B cell (primary cell): ENCODE measurements at regions of chr7 and their contacts with region 1.

Region 1: DNA sequence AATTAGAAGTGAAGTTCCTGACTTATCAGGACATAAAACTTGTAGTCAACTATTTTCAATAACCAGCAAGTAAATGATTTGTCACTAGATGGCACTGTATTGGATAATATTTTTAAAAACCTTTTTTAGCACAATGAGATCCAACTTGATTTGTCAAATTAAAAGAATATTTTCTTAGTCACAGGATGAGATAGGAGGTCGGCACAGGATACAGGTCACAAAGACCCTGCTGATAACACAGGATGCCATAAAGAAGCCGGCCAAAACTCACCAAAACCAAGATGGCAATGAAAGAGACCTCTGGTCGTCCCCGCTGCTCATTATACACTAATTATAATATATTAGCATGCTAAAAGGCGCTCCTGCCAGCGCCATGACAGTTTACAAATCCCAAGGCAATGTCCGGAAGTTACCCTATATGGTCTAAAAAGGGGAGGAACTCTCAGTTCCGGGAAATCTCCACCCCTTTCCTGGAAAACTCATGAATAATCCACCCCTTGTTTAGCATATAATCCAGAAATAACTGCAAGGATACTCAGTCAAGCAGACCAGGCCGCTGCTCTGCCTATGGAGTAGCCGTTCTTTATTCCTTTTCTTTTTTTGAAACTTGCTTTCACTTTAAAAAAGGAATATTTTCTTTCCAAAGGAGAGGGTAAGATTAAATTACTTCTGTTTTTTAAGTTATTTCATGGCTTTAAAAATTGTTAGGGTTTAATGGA is 255.7 kb upstream of the MKLN1 start:
- DNase-seq: no peak
- ATAC-seq: no peak
- H3K4me3 ChIP-seq: no peak overlapping the region
- H3K4me3 Mint-ChIP-seq: no peak overlapping the region
- H3K27ac ChIP-seq: no peak overlapping the region
- H3K27ac Mint-ChIP-seq: no peak overlapping the region
- H3K4me1 ChIP-seq: peaks cover 38 to 48% of the 10 kb centered on the region in 2 donors
- H3K4me1 Mint-ChIP-seq: peaks cover 78% of the 10 kb centered on the region
- H3K27me3 ChIP-seq: no peaks in the 10 kb centered on the region
- H3K27me3 Mint-ChIP-seq: no peaks in the 10 kb centered on the region
- CTCF ChIP-seq: peak; percentile 65

Region 2: DNA sequence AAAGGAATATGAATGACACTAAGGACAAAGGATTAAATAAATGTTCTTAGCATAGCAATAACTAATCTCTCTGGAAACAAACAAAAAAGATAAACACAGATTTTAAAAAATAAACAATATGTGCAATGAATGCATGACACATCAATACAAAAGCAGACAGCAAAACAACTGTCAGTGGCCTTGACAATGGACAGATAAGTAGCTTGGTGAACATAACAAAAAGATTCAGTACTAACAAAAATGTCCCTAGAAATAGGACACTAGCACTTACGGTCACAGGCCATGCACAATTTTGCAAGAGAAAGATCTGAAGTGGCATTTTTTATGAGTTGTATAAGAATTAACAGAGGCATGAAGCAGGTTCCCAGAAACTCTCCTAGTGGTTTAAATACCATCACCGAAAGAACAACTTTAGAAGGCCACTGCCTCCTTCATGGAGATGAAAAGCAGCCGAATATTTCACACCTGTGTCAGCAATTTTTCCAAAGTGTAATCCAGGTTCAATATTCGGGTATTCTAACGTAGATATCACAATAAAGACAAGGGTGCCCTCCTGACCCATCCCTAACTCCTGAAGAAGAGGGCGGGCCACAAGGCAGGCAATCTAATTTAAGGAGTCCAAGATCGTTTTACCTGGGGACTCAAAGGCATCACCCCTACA is 24.5 kb after region 1 on chr7:
- CTCF ChIA-PET with region 1: interaction called, 3 read pairs
- POLR2A ChIA-PET with region 1: no interaction called
- intact Hi-C with region 1: loop called (anchors 2 kb)
- DNase-seq: no peak
- ATAC-seq: no peak
- H3K4me3 ChIP-seq: no peak overlapping the region
- H3K4me3 Mint-ChIP-seq: no peak overlapping the region
- H3K27ac ChIP-seq: no peak overlapping the region
- H3K27ac Mint-ChIP-seq: no peak overlapping the region
- H3K4me1 ChIP-seq: peaks cover 39 to 48% of the 10 kb centered on the region in 2 donors
- H3K4me1 Mint-ChIP-seq: peaks cover 77% of the 10 kb centered on the region
- H3K27me3 ChIP-seq: no peaks in the 10 kb centered on the region
- H3K27me3 Mint-ChIP-seq: no peaks in the 10 kb centered on the region
- CTCF ChIP-seq: no peak

Region 3: GRCh38 chr7:131112431-131112830 is 40.5 kb after region 1 on chr7:
- CTCF ChIA-PET with region 1: no interaction called
- POLR2A ChIA-PET with region 1: no interaction called
- intact Hi-C with region 1: no loop called
- DNase-seq: peak; percentile 41
- ATAC-seq: no peak
- H3K4me3 ChIP-seq: no peak overlapping the region
- H3K4me3 Mint-ChIP-seq: peak overlapping the region; percentile 55
- H3K27ac ChIP-seq: no peak overlapping the region
- H3K27ac Mint-ChIP-seq: peak overlapping the region; percentile 44
- H3K4me1 ChIP-seq: peaks cover 45 to 47% of the 10 kb centered on the region in 2 donors
- H3K4me1 Mint-ChIP-seq: peaks cover 49% of the 10 kb centered on the region
- H3K27me3 ChIP-seq: no peaks in the 10 kb centered on the region
- H3K27me3 Mint-ChIP-seq: no peaks in the 10 kb centered on the region
- CTCF ChIP-seq: no peak

Region 4: GRCh38 chr7:131302876-131303707 is 231.1 kb after region 1 on chr7:
- CTCF ChIA-PET with region 1: interaction called, 20 read pairs
- POLR2A ChIA-PET with region 1: no interaction called
- intact Hi-C with region 1: loop called (anchors 1 kb)
- DNase-seq: peak; percentile 42
- ATAC-seq: no peak
- H3K4me3 ChIP-seq: no peak overlapping the region
- H3K4me3 Mint-ChIP-seq: no peak overlapping the region
- H3K27ac ChIP-seq: no peak overlapping the region
- H3K27ac Mint-ChIP-seq: no peak overlapping the region
- H3K4me1 ChIP-seq: no peaks in the 10 kb centered on the region
- H3K4me1 Mint-ChIP-seq: peaks cover 2% of the 10 kb centered on the region
- H3K27me3 ChIP-seq: no peaks in the 10 kb centered on the region
- H3K27me3 Mint-ChIP-seq: no peaks in the 10 kb centered on the region
- CTCF ChIP-seq: peak; percentile 41

Region 5: GRCh38 chr7:131424219-131424822 is 352.4 kb after region 1 on chr7:
- CTCF ChIA-PET with region 1: interaction called, 7 read pairs
- POLR2A ChIA-PET with region 1: no interaction called
- intact Hi-C with region 1: loop called (anchors 1 kb)
- DNase-seq: peak; percentile 56
- ATAC-seq: peak; percentile 69
- H3K4me3 ChIP-seq: no peak overlapping the region
- H3K4me3 Mint-ChIP-seq: no peak overlapping the region
- H3K27ac ChIP-seq: no peak overlapping the region
- H3K27ac Mint-ChIP-seq: no peak overlapping the region
- H3K4me1 ChIP-seq: no peaks in the 10 kb centered on the region
- H3K4me1 Mint-ChIP-seq: peaks cover 2% of the 10 kb centered on the region
- H3K27me3 ChIP-seq: no peaks in the 10 kb centered on the region
- H3K27me3 Mint-ChIP-seq: no peaks in the 10 kb centered on the region
- CTCF ChIP-seq: peak; percentile 80